ENCODE measurements at regions of chr2 and their contacts with region 1.

Region 1: DNA sequence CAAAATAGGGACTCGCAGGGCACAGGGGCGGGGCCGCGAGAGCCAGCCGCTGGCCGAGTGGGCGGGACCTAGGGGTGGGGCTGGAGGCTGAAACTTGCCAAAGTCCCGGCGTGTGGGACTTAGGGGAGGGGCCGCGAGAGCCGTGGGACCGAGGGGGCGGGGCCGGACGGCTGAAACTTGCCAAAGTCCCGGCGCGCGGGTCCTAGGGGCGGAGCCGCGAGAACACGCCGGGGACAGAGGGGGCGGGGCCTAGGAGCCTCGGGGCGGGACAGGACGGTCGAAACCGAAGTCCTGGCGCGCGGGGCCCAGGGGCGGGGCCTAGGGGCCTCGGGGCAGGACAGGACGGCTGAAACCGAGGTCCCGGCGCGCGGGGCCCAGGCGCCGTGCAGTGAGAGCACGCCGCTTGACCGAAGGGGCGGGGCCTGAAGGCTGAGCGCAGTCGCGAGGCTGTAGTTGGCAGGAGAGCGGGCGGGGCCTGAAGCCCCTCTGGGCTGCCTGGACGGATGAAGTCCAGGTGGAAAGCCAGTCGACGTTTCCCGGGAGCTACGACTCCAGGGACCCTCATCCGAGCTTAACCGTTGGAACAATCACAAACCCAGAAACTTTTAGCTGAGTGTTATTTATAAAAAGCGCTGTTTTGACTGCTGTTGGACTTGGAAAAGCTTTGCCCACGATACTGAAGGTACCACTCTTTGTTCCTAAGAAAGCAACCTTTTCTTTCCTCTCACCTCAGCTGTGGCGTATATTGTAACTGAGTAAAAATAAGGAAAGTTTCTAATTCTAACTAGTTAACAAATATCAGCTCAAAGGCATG is 475 bp upstream of the BARD1 start:
- DNase-seq: peak; percentile 100
- ATAC-seq: peak; percentile 89
- H3K4me3 Mint-ChIP-seq: peak overlapping the region; percentile 88
- H3K27ac Mint-ChIP-seq: peak overlapping the region; percentile 73
- H3K4me1 Mint-ChIP-seq: peaks cover 23% of the 10 kb centered on the region
- H3K27me3 Mint-ChIP-seq: peaks cover 3% of the 10 kb centered on the region

Region 2: DNA sequence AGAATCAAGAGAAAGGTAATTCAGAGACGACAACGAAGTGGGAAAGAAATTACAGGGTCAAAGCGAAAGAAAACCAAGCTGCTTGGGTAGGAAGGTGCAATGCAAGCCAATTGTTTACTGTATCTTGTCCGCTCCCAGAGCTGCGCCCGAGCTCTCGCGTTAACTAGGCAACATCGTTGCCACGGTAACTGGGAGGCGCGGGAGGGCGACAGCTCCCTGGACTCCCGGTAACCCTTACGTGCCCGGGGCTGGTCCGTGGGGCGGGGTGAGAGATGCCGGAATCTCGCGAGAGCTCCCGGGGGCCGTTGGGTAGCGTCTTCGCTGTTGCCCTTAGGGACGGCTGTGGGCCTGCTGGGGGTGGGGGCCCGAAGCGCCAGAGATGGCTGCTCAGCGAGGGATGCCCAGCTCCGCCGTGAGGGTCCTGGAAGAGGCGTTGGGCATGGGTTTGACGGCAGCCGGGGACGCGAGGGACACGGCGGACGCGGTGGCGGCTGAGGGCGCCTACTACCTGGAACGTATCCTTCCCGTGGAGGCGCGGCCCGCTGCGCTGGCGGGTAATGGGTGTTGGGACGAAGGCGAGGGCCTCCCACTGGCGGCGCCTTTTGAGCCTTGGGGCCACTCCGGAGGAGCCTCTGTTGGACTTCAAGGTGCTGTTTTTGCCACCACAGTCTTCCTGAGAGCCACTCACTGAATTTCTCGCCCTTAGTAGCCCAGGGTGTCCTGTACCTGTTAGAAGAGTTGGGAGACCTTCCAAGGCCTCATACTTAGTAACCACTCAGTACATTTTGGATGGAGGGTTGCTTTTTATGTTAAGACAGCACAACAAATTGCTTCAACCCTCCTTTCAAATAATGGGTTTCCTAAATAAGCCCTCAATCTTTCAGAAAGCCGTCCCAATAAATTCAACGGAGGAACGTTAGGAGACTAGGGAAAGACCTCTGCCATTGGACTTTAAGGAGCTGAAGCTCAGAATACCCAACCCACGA is 1525.6 kb before region 1 on chr2 and contains the start of gene SPAG16:
- CTCF ChIA-PET with region 1: no interaction called
- POLR2A ChIA-PET with region 1: no interaction called
- intact Hi-C with region 1: loop called (anchors 1 to 2 kb)
- DNase-seq: peak; percentile 99
- ATAC-seq: peak; percentile 99
- H3K4me3 Mint-ChIP-seq: peak within 1 kb of the TSS; percentile 88
- H3K27ac Mint-ChIP-seq: peak within 1 kb of the TSS; percentile 88
- H3K4me1 Mint-ChIP-seq: peaks cover 23% of the 10 kb centered on the region
- H3K27me3 Mint-ChIP-seq: no peaks in the 10 kb centered on the region
- total RNA-seq, gene SPAG16: 10.1 to 10.8 TPM

Region 3: DNA sequence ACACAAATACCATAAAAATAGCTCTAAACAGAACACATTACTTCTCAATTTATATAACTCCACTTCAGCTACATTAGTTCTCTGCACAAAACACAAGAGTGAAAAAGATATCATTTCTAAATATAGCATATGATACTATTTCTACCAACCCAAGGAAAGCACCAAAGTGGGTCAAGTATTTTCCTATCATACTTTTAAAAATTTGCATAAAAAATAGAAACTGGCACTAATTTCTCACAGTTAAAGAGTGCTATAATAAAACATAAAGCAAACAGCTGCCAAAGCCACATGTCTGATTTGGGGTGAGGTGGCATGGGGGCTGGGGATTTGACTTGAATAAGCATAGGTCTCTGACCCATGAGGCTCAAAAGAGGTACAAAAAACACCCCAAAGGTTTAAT is 62.0 kb before region 1 on chr2:
- CTCF ChIA-PET with region 1: no interaction called
- POLR2A ChIA-PET with region 1: no interaction called
- intact Hi-C with region 1: no loop called
- DNase-seq: no peak
- ATAC-seq: no peak
- H3K4me3 Mint-ChIP-seq: no peak overlapping the region
- H3K27ac Mint-ChIP-seq: no peak overlapping the region
- H3K4me1 Mint-ChIP-seq: no peaks in the 10 kb centered on the region
- H3K27me3 Mint-ChIP-seq: no peaks in the 10 kb centered on the region

Region 4: GRCh38 chr2:215002500-215002899 is 192.5 kb after region 1 on chr2:
- CTCF ChIA-PET with region 1: no interaction called
- POLR2A ChIA-PET with region 1: no interaction called
- intact Hi-C with region 1: no loop called
- DNase-seq: peak; percentile 10
- ATAC-seq: no peak
- H3K4me3 Mint-ChIP-seq: no peak overlapping the region
- H3K27ac Mint-ChIP-seq: no peak overlapping the region
- H3K4me1 Mint-ChIP-seq: no peaks in the 10 kb centered on the region
- H3K27me3 Mint-ChIP-seq: peaks cover 5% of the 10 kb centered on the region

Region 5: GRCh38 chr2:215435809-215436704 is 626.1 kb after region 1 on chr2 and contains the start of gene FN1:
- CTCF ChIA-PET with region 1: no interaction called
- POLR2A ChIA-PET with region 1: no interaction called
- intact Hi-C with region 1: loop called in 1 of 2 experiments (anchors 10 kb)
- DNase-seq: peak; percentile 77
- ATAC-seq: peak; percentile 75
- H3K4me3 Mint-ChIP-seq: peak within 1 kb of the TSS; percentile 70
- H3K27ac Mint-ChIP-seq: no peak within 1 kb of the TSS
- H3K4me1 Mint-ChIP-seq: peaks cover 13% of the 10 kb centered on the region
- H3K27me3 Mint-ChIP-seq: peaks cover 56% of the 10 kb centered on the region
- total RNA-seq, gene FN1: 0.59 to 0.70 TPM